Aorta (tissue), 5 donors: ENCODE measurements at regions of chr15 and their contacts with region 1.

Region 1: DNA sequence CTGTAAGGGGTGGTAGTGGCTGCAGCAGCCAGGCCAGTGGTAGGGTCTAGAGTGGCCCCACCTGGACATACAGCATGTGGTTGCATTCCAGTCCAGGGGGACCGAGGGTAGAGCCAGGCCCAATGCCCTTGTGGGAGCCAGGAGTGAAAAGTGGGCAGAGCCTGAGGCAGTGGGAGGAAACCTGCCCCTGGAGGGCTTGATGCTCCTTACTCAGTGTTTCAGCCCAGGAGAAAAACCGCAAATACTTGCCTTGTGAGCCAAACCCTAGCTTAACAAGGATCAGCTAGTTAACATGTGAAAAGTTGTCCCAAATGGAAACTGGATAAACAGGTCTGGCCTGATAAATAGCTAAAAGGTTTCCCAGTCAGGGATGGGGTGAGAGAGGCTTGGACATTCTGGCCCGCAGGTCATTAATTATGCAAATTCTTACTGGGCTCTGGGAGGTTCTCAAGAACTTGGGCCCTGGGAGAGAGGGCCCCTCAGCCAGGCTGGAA is 222.0 kb downstream of the THSD4 start:
- DNase-seq: no peak
- ATAC-seq: no peak
- H3K4me3 ChIP-seq: no peak overlapping the region
- H3K27ac ChIP-seq: peak overlapping the region; percentile 28 to 69
- H3K4me1 ChIP-seq: peaks cover 0 to 9% of the 10 kb centered on the region in 2 donors
- H3K27me3 ChIP-seq: no peaks in the 10 kb centered on the region

Region 2: DNA sequence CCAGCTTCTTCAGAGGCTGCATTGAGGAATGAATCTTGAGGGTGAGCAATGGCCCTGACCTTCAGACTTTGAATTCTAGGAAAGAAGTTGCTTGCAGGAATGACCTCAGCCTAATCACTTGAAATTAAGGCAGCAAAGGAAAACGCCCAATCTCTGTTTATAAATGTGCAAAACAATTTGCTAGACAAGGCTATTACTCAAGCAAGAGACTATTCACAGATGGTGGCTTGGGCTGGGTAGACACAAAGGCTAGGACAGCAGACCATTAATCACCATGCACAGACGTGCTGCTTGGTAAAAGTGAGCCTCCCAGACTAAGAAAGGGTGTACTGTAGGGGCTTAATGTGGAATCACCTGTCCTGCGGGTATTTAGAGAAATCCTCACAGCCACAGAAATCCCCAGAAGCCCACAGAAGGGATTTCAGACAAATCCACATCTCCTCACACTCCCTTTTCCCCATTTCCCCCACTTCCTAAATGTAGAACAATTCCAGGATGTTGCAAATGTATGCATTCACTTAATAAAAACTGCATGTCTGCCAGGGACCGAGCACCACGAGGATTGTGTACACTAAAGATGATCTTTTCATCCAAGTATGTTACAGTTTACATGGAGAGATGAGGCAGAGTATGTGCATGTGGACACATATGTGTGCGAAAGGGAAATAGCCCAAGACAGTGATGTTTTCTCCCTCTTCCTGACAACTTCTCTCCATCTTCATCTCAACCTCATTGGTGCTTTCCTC is 37.5 kb after region 1 on chr15:
- intact Hi-C with region 1: loop called in 1 of 2 experiments (anchors 5 kb)
- DNase-seq: no peak
- ATAC-seq: peak; percentile 36
- H3K4me3 ChIP-seq: no peak overlapping the region
- H3K27ac ChIP-seq: peak overlapping the region in 1 of 2 donors; percentile 38
- H3K4me1 ChIP-seq: peaks cover under 1 to 10% of the 10 kb centered on the region in 2 donors
- H3K27me3 ChIP-seq: no peaks in the 10 kb centered on the region